Mammary epithelial cell (primary cell): ENCODE measurements at regions of chr2 and their contacts with region 1.

Region 1: DNA sequence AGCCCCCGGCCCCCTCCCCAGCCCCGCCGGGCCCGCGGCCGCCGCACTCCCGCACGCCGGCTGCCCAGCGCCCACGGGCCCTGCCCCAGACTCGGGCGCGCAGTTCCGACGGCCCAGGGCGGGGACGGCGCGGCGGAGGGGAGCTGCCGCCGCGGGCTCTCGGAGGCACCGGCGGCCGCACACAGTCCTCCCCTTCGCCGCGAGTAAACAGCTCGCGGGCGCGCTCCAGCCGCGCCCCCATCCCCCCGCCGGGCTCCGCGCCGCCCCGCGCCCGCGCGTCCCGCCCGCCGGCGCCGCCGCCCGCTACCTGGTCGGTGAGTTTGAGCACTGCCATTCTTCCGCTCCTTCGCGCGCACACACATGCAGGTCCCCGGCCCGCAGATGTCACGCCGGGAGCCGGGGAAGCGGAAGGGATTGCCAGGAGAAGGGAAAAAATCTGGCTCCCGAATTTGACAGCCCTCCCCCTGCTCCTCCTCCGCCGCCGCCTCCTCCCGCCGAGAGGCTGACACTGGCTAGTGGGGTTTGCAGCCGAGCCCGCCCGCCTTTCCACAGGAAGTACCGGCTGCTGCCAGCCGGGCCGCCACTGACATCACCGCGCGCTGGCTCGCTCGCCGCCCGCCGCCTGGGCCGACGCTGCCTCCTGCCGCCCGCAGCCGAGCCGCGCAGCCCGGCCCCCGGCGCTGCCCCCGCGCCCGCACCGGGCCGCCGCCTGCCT is at the start of gene ANKRD44:
- DNase-seq: peak; percentile 82
- H3K4me3 ChIP-seq: peak within 1 kb of the TSS; percentile 70 to 80 (median 76)
- H3K27ac ChIP-seq: no peak within 1 kb of the TSS
- H3K4me1 ChIP-seq: peaks cover 9% of the 10 kb centered on the region
- H3K27me3 ChIP-seq: no peaks in the 10 kb centered on the region
- CTCF ChIP-seq: peak in 1 of 2 donors; percentile 18
- total RNA-seq, gene ANKRD44: 4.0 to 10.2 TPM

Region 2: DNA sequence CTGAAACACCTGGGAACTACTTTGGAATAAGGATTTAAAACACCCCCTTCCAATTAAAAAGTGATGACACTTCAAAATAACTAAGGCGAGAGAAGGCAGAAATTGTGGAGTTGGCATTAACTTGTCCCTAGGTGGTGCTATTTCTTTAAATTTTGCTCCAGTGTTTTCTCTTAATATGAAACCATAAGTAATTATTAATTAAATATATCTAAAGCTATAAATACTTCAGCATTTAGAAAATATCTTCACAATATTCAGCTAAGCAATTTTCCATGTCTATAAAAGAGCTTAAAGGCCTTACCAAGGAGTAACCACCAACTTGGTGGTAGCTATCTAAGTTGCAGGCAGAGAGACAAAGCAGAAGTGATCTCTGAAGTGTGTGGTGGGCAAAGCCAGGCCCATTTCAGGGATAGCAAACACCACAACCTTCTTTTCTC is 197.1 kb before region 1 on chr2:
- CTCF ChIA-PET with region 1: no interaction called
- dilution Hi-C with region 1: no loop called
- in situ Hi-C with region 1: loop called in 1 of 2 experiments (anchors 25 kb)
- intact Hi-C with region 1: loop called (anchors 2 kb)
- DNase-seq: peak; percentile 6
- H3K4me3 ChIP-seq: no peak overlapping the region
- H3K27ac ChIP-seq: no peak overlapping the region
- H3K4me1 ChIP-seq: no peaks in the 10 kb centered on the region
- H3K27me3 ChIP-seq: no peaks in the 10 kb centered on the region
- CTCF ChIP-seq: peak; percentile 47 to 53

Region 3: GRCh38 chr2:197184959-197185586 is 125.4 kb before region 1 on chr2:
- CTCF ChIA-PET with region 1: no interaction called
- dilution Hi-C with region 1: no loop called
- in situ Hi-C with region 1: loop called (anchors 5 to 10 kb)
- intact Hi-C with region 1: no loop called
- DNase-seq: peak; percentile 32
- H3K4me3 ChIP-seq: no peak overlapping the region
- H3K27ac ChIP-seq: no peak overlapping the region
- H3K4me1 ChIP-seq: no peaks in the 10 kb centered on the region
- H3K27me3 ChIP-seq: no peaks in the 10 kb centered on the region
- CTCF ChIP-seq: no peak

Region 4: DNA sequence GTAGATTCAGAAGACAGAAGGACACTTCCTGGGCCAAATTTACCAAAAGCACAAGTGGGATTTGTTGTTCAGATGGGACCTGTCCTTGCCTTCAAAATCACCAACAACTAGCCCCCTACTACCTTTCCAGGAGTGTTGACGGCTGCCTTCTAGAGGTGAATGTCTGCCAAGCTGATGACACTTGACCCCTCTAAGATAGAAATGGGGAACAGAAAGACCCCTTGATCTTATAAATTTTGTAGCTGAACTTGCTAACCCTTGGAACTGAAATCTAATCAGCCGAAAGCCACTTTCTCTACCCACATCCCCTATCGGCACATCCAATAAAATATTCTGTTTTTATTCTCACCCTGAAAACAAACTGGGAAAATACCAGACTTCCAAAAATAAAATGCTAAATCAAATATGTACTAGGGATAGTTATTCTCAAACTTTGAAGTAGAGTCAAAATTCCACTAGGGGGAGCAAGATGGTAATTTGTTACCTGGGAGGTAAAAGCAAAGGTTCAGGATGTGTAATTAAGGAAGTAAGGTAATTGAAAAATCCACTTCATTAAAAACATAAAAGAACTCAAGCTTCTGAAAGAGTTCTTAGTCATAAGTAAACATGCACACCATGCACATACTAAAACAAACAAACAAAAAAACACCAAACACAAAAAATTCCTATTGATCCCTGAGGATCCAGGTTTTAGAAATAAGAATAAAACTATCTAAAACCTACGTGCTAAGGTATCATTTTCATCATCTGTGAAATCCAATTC is 119.1 kb before region 1 on chr2:
- CTCF ChIA-PET with region 1: no interaction called
- dilution Hi-C with region 1: no loop called
- in situ Hi-C with region 1: loop called (anchors 5 to 10 kb)
- intact Hi-C with region 1: loop called (anchors 1 kb)
- DNase-seq: peak; percentile 32
- H3K4me3 ChIP-seq: no peak overlapping the region
- H3K27ac ChIP-seq: no peak overlapping the region
- H3K4me1 ChIP-seq: no peaks in the 10 kb centered on the region
- H3K27me3 ChIP-seq: no peaks in the 10 kb centered on the region
- CTCF ChIP-seq: peak; percentile 62 to 67

Region 5: DNA sequence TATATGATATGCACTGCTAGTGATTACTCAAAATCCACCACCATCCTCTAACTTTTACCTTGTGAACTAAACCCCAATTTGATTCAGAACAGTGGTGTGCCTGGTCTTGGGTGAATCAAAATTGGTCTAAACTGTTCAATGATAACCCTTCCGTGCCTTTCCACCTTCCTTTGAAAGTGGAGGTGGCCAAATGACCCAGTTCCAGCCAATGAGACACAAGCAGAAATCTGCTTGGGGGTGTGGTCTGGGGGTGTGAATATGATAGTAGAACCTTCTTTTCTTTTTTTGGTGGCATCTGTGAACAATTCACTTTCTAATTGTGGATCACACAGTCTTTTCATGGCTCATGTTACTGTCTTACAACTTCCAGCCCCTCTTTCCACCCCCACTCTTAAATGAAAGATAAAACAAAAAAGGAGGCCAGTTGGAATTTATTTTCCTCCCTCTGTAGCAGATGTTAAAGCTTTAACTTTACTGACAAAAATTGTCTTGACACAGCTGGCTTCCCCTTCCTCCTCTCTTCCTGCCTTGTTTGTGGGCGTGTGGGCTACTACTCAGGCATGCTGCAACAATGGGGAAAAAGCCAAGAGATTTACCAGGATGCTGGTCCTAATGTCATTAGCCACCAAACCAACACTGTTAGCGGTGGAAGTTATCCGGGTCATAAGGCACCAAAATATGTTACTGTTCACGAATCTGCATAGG is 59.0 kb after region 1 on chr2:
- CTCF ChIA-PET with region 1: no interaction called
- dilution Hi-C with region 1: no loop called
- in situ Hi-C with region 1: no loop called
- intact Hi-C with region 1: no loop called
- DNase-seq: no peak
- H3K4me3 ChIP-seq: no peak overlapping the region
- H3K27ac ChIP-seq: no peak overlapping the region
- H3K4me1 ChIP-seq: no peaks in the 10 kb centered on the region
- H3K27me3 ChIP-seq: no peaks in the 10 kb centered on the region
- CTCF ChIP-seq: no peak

Region 6: GRCh38 chr2:197399887-197400540 is 89.6 kb after region 1 on chr2:
- CTCF ChIA-PET with region 1: no interaction called
- dilution Hi-C with region 1: no loop called
- in situ Hi-C with region 1: no loop called
- intact Hi-C with region 1: no loop called
- DNase-seq: no peak
- H3K4me3 ChIP-seq: no peak overlapping the region
- H3K27ac ChIP-seq: no peak overlapping the region
- H3K4me1 ChIP-seq: peaks cover 8% of the 10 kb centered on the region
- H3K27me3 ChIP-seq: no peaks in the 10 kb centered on the region
- CTCF ChIP-seq: no peak

Region 7: GRCh38 chr2:197434541-197435513 is 124.4 kb after region 1 on chr2 and contains the start of gene SF3B1:
- CTCF ChIA-PET with region 1: no interaction called
- dilution Hi-C with region 1: no loop called
- in situ Hi-C with region 1: no loop called
- intact Hi-C with region 1: loop called (anchors 1 kb)
- DNase-seq: peak; percentile 98
- H3K4me3 ChIP-seq: peak within 1 kb of the TSS; percentile 76 to 91 (median 88)
- H3K27ac ChIP-seq: peak within 1 kb of the TSS; percentile 94
- H3K4me1 ChIP-seq: peaks cover 12% of the 10 kb centered on the region
- H3K27me3 ChIP-seq: no peaks in the 10 kb centered on the region
- CTCF ChIP-seq: no peak
- total RNA-seq, gene SF3B1: 132 to 153 TPM

Region 8: DNA sequence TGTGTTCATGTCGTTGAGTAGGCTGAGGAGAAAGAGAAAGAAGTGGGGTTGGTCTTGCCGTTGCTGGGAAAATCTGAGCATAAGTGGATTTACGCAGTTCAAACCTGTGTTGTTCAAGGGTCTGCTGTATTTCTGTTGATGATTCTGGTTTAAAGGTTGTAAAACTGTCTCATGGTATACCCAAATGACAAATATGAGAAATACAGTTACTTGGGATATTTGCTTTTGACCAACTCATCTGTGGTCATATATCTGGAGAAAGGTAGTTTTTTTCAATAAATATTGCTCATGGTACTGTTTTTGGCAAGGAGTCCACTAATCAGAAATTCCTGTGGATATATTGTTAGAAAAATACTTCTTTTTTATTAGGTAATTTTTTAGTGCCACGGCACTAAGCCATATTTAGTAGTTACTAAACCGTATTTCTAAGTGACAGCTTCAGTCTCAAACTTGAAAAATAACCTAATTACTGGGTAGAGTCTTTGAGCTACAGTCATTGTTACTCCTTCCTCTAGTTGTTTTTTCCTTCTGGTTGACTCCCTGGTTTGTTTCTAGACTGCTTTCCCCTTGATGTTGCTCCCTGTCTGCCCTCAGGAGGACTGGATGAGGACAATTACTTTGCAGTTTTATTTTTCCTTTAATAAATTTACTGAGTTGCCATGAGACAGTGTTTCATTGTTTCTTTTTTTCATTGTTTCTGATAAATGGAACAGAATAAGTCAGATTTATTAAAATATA is 236.9 kb after region 1 on chr2:
- CTCF ChIA-PET with region 1: no interaction called
- dilution Hi-C with region 1: no loop called
- in situ Hi-C with region 1: no loop called
- intact Hi-C with region 1: no loop called
- DNase-seq: no peak
- H3K4me3 ChIP-seq: no peak overlapping the region
- H3K27ac ChIP-seq: no peak overlapping the region
- H3K4me1 ChIP-seq: no peaks in the 10 kb centered on the region
- H3K27me3 ChIP-seq: no peaks in the 10 kb centered on the region
- CTCF ChIP-seq: no peak

Region 9: GRCh38 chr2:197777823-197778407 is 467.5 kb after region 1 on chr2:
- CTCF ChIA-PET with region 1: no interaction called
- dilution Hi-C with region 1: no loop called
- in situ Hi-C with region 1: no loop called
- intact Hi-C with region 1: loop called (anchors 5 kb)
- DNase-seq: peak; percentile 4
- H3K4me3 ChIP-seq: no peak overlapping the region
- H3K27ac ChIP-seq: no peak overlapping the region
- H3K4me1 ChIP-seq: no peaks in the 10 kb centered on the region
- H3K27me3 ChIP-seq: no peaks in the 10 kb centered on the region
- CTCF ChIP-seq: peak; percentile 60 to 64